Mammary epithelial cell (primary cell): ENCODE measurements at regions of chr2 and their contacts with region 1.

Region 1: GRCh38 chr2:240851078-240851991 is 17.3 kb upstream of the AGXT start:
- DNase-seq: peak; percentile 52
- H3K4me3 ChIP-seq: no peak overlapping the region
- H3K27ac ChIP-seq: no peak overlapping the region
- H3K4me1 ChIP-seq: no peaks in the 10 kb centered on the region
- H3K27me3 ChIP-seq: peaks cover 2% of the 10 kb centered on the region
- CTCF ChIP-seq: peak; percentile 90 to 98

Region 2: DNA sequence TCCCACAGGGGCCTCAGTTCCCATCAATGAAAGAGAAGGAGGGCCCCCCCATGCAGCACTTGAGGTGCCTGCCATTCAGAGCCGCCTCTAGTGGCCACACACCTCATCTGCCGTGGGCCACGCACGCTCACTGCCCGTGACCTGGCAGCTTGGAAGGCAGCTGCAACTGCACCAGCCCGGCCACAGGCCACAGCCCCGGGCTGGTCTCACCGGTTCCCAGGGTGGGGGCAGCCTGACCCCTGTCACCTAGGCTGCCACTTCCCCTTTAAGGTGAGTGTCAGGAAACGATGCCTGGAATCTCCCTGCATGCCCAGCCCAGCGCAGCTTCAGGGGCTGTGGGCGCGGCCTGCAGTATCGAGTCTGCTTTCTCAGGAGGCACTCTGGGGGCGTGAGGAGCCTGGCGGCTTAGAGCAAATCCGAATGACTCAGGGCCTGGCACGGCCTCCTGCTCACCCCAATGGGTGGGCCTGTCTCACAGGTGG is 42.1 kb after region 1 on chr2:
- CTCF ChIA-PET with region 1: no interaction called
- dilution Hi-C with region 1: loop called (anchors 5 kb)
- in situ Hi-C with region 1: no loop called
- intact Hi-C with region 1: no loop called
- DNase-seq: peak; percentile 75
- H3K4me3 ChIP-seq: no peak overlapping the region
- H3K27ac ChIP-seq: no peak overlapping the region
- H3K4me1 ChIP-seq: peaks cover 29% of the 10 kb centered on the region
- H3K27me3 ChIP-seq: peaks cover 6% of the 10 kb centered on the region
- CTCF ChIP-seq: peak in 1 of 2 donors; percentile 13

Region 3: DNA sequence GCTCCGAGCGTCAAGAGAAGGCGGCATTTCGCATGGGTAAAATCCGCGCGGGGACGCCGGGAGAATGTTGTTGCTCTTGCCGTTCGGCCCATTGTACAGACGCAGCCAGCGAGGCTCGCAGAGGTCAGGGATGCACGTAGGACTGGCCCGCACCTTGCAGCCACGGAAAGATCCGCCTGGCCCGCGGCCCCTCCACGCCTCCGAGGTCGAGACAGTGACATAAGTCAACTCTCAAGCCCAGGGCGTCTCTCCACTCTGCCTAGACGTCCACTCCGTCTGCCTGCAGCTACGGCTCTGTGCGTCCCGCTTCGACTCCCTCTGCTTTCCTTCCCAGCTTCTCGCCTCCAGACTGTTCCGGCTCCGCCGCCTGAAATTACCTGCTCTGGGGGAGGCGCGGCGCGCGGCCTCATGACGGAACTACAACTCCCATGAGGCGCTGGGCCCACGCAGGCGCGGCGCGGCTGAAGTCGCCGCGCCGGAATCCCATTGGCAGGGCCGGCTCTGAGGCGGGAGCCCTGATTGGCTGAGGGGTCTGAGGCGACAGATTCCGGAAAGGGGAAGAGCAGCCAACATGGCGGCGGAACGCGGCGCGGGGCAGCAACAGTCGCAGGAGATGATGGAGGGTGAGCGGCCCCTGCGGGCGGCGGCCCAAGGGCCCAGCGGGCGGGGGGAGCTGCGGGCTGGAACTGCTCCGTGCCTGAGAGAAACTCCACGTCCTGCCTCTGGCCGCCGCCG is 298.8 kb after region 1 on chr2 and contains the start of gene PPP1R7:
- CTCF ChIA-PET with region 1: no interaction called
- dilution Hi-C with region 1: no loop called
- in situ Hi-C with region 1: no loop called
- intact Hi-C with region 1: loop called (anchors 2 kb)
- DNase-seq: peak; percentile 94
- H3K4me3 ChIP-seq: peak within 1 kb of the TSS; percentile 69 to 85 (median 80)
- H3K27ac ChIP-seq: peak within 1 kb of the TSS; percentile 56
- H3K4me1 ChIP-seq: peaks cover 22% of the 10 kb centered on the region
- H3K27me3 ChIP-seq: no peaks in the 10 kb centered on the region
- CTCF ChIP-seq: no peak
- total RNA-seq, gene PPP1R7: 39.2 to 66.5 TPM

Region 4: GRCh38 chr2:241355983-241356870 is 504.9 kb after region 1 on chr2 and contains the start of gene FARP2:
- CTCF ChIA-PET with region 1: no interaction called
- dilution Hi-C with region 1: no loop called
- in situ Hi-C with region 1: no loop called
- intact Hi-C with region 1: loop called (anchors 10 kb)
- DNase-seq: peak; percentile 96
- H3K4me3 ChIP-seq: peak within 1 kb of the TSS; percentile 84 to 92 (median 86)
- H3K27ac ChIP-seq: peak within 1 kb of the TSS; percentile 59
- H3K4me1 ChIP-seq: peaks cover 16% of the 10 kb centered on the region
- H3K27me3 ChIP-seq: no peaks in the 10 kb centered on the region
- CTCF ChIP-seq: no peak
- total RNA-seq, gene FARP2: 38.5 to 40.2 TPM

Region 5: GRCh38 chr2:241659150-241659739 is 807.9 kb after region 1 on chr2:
- CTCF ChIA-PET with region 1: no interaction called
- dilution Hi-C with region 1: no loop called
- in situ Hi-C with region 1: no loop called
- intact Hi-C with region 1: loop called (anchors 1 kb)
- DNase-seq: peak; percentile 44
- H3K4me3 ChIP-seq: no peak overlapping the region
- H3K27ac ChIP-seq: no peak overlapping the region
- H3K4me1 ChIP-seq: no peaks in the 10 kb centered on the region
- H3K27me3 ChIP-seq: no peaks in the 10 kb centered on the region
- CTCF ChIP-seq: peak; percentile 53 to 64